ENCODE measurements at regions of chr9 and their contacts with region 1.

Region 1: DNA sequence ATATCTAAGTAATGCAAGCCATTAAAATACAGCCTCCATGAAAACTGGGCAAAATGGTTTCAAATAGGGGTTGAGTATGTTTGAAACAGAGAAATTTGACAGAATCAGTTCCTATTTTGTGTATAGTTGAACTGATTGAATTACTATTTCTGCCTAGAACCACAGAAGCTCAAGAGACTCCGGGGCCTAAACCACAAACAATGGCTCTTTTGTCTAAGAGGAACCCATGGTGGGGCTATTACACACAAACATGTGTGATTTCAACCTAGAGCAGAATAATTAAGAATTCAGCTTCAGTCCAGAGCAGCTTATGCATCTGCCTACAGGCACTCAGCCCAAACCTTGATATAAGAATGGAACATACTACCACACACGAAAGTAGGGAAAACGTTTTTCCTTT is 171.2 kb upstream of the MPDZ start:
- DNase-seq: no peak
- H3K4me3 ChIP-seq: no peak overlapping the region
- H3K27ac ChIP-seq: no peak overlapping the region
- H3K4me1 ChIP-seq: peaks cover 0 to 7% (median 3%) of the 10 kb centered on the region in 4 donors
- H3K27me3 ChIP-seq: no peaks in the 10 kb centered on the region
- CTCF ChIP-seq: no peak
- EP300 ChIP-seq: no peak
- POLR2A ChIP-seq: no peak

Region 2: GRCh38 chr9:13568841-13569601 is 118.3 kb after region 1 on chr9:
- intact Hi-C with region 1: loop called (anchors 10 kb)
- DNase-seq: no peak
- H3K4me3 ChIP-seq: peak overlapping the region; percentile 21 to 42 (median 40)
- H3K27ac ChIP-seq: peak overlapping the region; percentile 70 to 75 (median 73)
- H3K4me1 ChIP-seq: peaks cover 17 to 29% (median 21%) of the 10 kb centered on the region in 4 donors
- H3K27me3 ChIP-seq: no peaks in the 10 kb centered on the region
- CTCF ChIP-seq: no peak
- EP300 ChIP-seq: no peak
- POLR2A ChIP-seq: no peak

Region 3: DNA sequence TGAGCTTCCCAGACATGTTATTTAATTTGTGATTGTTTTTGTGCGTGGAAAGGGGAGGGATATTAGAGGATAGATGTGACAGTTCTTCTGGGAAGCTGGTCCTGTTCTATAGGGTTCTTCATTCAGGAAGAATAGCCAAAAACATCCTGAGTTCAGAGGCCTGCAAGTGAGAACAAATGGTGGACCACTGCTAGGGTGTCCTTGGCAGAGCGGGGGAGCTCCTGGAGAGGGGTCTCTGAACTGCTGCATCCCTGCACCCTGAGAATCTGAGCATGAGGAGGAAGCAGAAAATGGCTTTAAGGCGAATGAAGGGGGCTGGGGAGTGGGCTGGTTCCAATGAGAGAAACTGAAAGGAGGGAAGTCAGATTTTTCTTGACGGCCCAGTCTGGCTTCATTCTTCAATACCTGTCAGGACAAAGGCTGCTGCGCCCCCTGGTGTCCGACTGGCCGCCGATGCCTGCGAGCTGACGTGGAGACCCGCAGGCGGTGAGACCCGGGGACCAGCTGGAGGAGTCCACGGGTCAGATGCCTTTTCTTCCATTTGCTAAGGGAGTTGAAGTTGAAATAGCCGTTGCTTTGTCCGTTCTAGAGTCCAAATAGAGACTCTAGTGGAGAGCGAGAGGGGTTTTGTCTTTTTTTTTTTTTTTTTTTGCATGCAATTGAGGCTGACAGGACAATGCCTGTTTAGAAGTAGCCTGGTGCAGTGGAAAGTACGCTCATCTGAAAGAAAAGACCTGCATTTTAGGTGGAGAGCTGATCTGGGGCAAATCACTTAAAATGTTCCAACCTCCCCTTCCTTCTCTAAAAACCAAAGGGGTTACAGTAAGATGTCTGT is 902.7 kb after region 1 on chr9:
- intact Hi-C with region 1: loop called (anchors 5 kb)
- DNase-seq: peak; percentile 98
- H3K4me3 ChIP-seq: peak overlapping the region; percentile 15 to 44 (median 33)
- H3K27ac ChIP-seq: peak overlapping the region; percentile 50 to 67 (median 62)
- H3K4me1 ChIP-seq: peaks cover 43 to 62% (median 52%) of the 10 kb centered on the region in 4 donors
- H3K27me3 ChIP-seq: peaks cover 0 to 19% (median 10%) of the 10 kb centered on the region in 4 donors
- CTCF ChIP-seq: peak; percentile 88 to 96 (median 90)
- EP300 ChIP-seq: no peak
- POLR2A ChIP-seq: no peak

Measured in esophagus muscularis mucosa (tissue), 4 donors.